Activated CD8-positive, alpha-beta T cell treated with anti-CD3 and anti-CD28 coated beads, Interleukin-2, amount 10 ng/mL, durations not matched to agents 7 days and 5 days (primary cell): ENCODE measurements at regions of chr12 and their contacts with region 1.

Region 1: DNA sequence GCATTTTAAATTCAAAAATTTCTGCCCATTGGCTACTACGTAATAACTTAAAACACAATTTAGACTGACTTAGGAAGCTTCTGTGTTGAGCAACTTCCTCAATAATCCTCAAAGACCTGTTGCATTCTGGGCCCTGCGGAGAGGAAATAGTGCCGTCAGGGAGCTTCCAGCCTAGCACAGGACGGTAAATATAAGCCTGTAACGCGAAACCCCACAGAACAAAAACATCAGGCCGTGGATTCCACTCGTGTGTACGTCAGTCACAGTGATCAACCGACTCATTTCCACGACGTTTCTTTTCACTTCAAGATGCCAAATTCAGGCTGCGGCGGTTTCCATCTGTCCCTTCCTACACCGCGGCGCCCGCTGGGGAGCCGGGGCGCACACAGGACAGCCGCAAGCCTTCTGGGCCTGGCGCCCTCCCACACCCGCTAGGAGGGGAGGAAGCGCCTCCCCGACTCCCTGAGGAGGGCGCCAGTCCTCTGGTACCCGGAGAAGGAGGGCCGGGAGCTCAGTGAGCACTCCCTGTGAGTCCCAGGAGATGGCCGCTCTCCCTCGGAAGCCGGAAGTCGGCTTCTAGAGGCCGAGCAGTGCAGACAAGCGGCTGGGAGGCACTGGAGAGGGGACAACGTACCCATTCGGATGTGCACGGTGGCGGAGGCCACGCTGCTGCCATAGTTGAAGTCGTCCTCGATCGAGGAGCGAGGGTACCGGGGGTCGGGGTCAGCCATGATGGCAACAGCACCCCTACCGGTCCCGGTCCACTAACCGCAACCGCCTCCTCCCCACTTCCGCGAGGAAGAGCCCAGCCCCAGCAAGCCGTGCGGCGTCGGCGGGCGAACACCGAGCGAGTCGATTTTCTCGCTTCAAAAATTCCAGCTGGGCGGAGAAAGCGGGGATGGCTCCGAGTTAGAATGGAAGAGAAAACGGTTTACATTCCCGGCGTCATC is at the start of gene TMBIM4:
- DNase-seq: peak; percentile 89
- ATAC-seq: peak; percentile 87
- H3K4me3 Mint-ChIP-seq: peak within 1 kb of the TSS; percentile 84
- H3K27ac Mint-ChIP-seq: peak within 1 kb of the TSS; percentile 99
- H3K4me1 Mint-ChIP-seq: peaks cover 43% of the 10 kb centered on the region
- H3K27me3 Mint-ChIP-seq: no peaks in the 10 kb centered on the region
- total RNA-seq, gene TMBIM4: 60.5 to 61.6 TPM

Region 2: DNA sequence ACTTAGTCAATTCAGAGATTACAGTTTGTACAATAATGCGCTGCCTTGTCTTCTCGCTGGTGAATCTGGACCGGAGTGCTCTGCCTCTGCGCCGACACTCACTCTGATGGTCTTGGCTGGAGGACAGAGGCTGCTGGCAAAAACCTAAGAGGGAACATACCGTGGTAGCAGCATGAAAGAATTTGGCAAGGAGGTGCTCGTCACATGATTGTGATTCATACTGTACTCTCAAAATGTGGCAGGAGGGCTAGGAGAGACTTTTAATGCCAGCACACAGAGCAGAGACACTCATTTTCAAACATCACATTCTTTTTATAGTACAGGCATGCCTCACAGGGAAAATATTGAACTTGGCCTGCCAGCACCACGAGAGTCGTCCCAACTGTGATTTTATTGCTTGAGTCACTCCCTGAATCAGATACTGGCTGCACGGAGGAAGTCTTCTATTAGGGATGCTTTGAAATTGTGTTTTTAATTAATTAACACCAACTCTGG is 277.5 kb before region 1 on chr12:
- CTCF ChIA-PET with region 1: no interaction called
- POLR2A ChIA-PET with region 1: no interaction called
- DNase-seq: no peak
- ATAC-seq: no peak
- H3K4me3 Mint-ChIP-seq: no peak overlapping the region
- H3K27ac Mint-ChIP-seq: no peak overlapping the region
- H3K4me1 Mint-ChIP-seq: no peaks in the 10 kb centered on the region
- H3K27me3 Mint-ChIP-seq: peaks cover 12% of the 10 kb centered on the region

Region 3: GRCh38 chr12:66144791-66145754 is 24.4 kb before region 1 on chr12:
- CTCF ChIA-PET with region 1: interaction called, 21 read pairs
- POLR2A ChIA-PET with region 1: interaction called, 6 read pairs
- DNase-seq: peak; percentile 28
- ATAC-seq: peak; percentile 49
- H3K4me3 Mint-ChIP-seq: no peak overlapping the region
- H3K27ac Mint-ChIP-seq: peak overlapping the region; percentile 78
- H3K4me1 Mint-ChIP-seq: peaks cover 17% of the 10 kb centered on the region
- H3K27me3 Mint-ChIP-seq: no peaks in the 10 kb centered on the region

Region 4: GRCh38 chr12:66159123-66159522 is 10.4 kb before region 1 on chr12:
- CTCF ChIA-PET with region 1: no interaction called
- POLR2A ChIA-PET with region 1: interaction called, 25 read pairs
- DNase-seq: no peak
- ATAC-seq: no peak
- H3K4me3 Mint-ChIP-seq: no peak overlapping the region
- H3K27ac Mint-ChIP-seq: no peak overlapping the region
- H3K4me1 Mint-ChIP-seq: peaks cover 2% of the 10 kb centered on the region
- H3K27me3 Mint-ChIP-seq: no peaks in the 10 kb centered on the region